Esophagus muscularis mucosa (tissue), 4 donors: ENCODE measurements at regions of chr21 and their contacts with region 1.

Region 1: DNA sequence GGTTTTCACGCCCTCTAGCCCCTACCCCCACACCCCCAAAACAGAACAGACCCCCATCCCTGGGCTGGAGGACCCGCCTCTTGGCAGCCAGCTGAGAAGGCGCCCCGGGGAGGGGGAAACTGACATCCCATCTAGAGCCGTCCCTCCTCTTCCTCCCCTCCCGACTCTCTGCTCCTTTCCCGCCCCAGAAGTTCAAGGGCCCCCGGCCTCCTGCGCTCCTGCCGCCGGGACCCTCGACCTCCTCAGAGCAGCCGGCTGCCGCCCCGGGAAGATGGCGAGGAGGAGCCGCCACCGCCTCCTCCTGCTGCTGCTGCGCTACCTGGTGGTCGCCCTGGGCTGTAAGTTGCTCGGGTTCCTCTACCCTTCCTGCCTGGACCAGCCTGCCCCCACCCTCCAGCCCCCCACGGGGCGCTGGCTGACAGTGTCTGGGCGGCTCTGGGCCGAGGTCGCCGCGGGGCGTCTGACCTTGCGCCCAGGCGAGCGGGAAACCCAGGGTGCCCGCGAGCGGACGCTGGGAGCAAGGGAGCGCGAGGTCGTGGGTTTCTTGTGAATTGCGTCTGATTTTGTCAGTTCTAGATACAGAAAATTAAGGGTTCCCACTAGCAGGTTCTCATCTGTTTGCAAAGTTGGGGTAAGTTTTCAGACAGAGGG is 618 bp downstream of the JAM2 start:
- DNase-seq: no peak
- H3K4me3 ChIP-seq: peak overlapping the region; percentile 76 to 90 (median 86)
- H3K27ac ChIP-seq: peak overlapping the region; percentile 93 to 97 (median 94)
- H3K4me1 ChIP-seq: peaks cover 10 to 35% (median 17%) of the 10 kb centered on the region in 4 donors
- H3K27me3 ChIP-seq: no peaks in the 10 kb centered on the region
- CTCF ChIP-seq: peak; percentile 26 to 52 (median 41)
- EP300 ChIP-seq: no peak
- POLR2A ChIP-seq: no peak

Region 2: DNA sequence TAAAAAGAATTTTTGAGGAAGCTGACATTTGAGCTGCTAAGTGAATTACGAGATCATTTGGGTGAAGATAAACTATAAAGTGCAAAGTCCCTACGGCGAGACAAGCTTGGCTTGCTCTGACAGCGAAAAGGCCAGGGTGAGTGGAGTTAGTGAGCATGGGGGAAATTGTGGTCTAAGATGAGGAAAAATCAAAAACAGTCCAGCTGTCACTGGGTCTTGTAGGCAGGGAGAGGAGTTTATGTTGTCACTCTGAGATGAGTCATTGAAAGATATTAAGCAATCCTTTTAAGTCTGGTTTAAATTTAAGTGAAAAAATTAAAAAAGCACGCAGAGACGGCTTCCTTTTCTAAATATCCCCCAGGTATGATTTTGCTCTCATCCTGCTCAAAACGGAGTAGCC is 634.3 kb before region 1 on chr21:
- intact Hi-C with region 1: no loop called
- DNase-seq: no peak
- H3K4me3 ChIP-seq: no peak overlapping the region
- H3K27ac ChIP-seq: no peak overlapping the region
- H3K4me1 ChIP-seq: no peaks in the 10 kb centered on the region
- H3K27me3 ChIP-seq: no peaks in the 10 kb centered on the region
- CTCF ChIP-seq: no peak
- EP300 ChIP-seq: no peak
- POLR2A ChIP-seq: no peak

Region 3: DNA sequence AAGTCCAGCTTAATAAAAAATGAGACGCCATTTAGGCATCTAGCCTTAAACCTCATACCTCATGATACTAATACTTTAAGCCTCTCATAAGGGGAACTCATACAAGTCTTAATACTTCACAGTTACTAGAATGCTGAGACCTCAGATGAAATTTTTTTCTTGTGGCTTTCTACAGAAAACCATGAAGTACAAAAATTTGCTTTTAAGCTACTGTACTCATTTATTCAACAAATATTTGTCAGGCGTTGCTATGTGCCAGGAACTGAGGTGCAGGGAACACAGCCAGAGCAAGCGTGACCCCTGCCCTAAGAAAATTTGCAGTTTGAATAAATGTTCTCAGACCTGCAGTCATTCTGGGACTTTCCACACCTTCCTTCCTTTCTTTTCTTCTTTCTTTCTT is 183.0 kb before region 1 on chr21:
- intact Hi-C with region 1: no loop called
- DNase-seq: no peak
- H3K4me3 ChIP-seq: no peak overlapping the region
- H3K27ac ChIP-seq: no peak overlapping the region
- H3K4me1 ChIP-seq: peaks cover 0 to 6% (median 2%) of the 10 kb centered on the region in 4 donors
- H3K27me3 ChIP-seq: no peaks in the 10 kb centered on the region
- CTCF ChIP-seq: no peak
- EP300 ChIP-seq: no peak
- POLR2A ChIP-seq: no peak

Region 4: DNA sequence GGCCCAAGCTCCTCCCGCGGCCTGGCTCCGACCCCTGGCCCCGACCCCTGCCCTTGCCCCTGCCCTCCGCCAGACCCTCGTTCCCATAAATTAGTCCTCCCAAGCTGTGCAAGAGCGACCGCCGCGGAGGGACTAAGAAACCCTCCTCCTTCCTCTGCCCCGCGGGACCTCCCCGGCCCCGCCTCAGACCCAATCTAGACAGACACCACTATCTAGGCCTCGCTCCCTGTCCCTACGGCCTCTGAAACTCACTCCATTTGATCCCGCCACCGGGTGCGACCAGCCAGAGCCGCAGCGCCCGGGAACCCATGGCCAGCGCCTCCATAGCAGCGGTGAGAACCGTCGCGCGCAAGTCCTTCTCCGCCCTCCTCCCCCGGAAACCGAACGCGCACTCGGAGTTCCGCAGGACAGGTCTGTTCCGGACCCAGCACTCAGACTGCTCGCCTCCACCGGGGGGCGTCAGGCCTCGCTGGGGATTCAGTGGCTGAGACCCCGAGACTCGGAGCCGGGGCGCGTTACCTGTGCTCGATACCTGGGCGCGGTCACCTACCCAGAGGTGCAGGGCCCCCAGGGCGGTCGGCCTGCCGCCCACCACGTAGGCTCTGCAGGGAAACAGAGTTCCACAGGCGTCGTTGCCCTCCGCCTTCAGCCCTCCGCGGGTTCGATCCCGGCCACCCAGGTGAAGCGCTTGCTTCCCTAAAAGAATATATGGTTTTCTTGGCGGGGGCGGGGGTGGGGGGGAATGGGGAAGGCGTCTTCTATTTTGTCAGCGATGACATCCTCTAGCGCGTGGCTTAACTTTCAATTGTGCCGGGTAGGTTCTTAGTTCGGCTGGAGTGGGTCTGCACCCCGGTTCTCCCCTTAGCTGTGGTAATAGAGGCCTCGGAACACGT is 32.3 kb before region 1 on chr21 and contains the start of gene MRPL39:
- intact Hi-C with region 1: loop called (anchors 2 kb)
- DNase-seq: peak; percentile 95
- H3K4me3 ChIP-seq: peak within 1 kb of the TSS; percentile 65 to 93 (median 82)
- H3K27ac ChIP-seq: peak within 1 kb of the TSS; percentile 77 to 88 (median 83)
- H3K4me1 ChIP-seq: peaks cover 13 to 55% (median 37%) of the 10 kb centered on the region in 4 donors
- H3K27me3 ChIP-seq: no peaks in the 10 kb centered on the region
- CTCF ChIP-seq: peak; percentile 44 to 59 (median 54)
- EP300 ChIP-seq: no peak
- POLR2A ChIP-seq: no peak
- total RNA-seq, gene MRPL39: 22.0 to 31.8 (median 27.4) TPM

Region 5: GRCh38 chr21:25664491-25664931 is 24.8 kb after region 1 on chr21:
- intact Hi-C with region 1: no loop called
- DNase-seq: no peak
- H3K4me3 ChIP-seq: no peak overlapping the region
- H3K27ac ChIP-seq: peak overlapping the region in 3 of 4 donors; percentile 37 to 50 (median 48)
- H3K4me1 ChIP-seq: peaks cover 0 to 13% (median 10%) of the 10 kb centered on the region in 4 donors
- H3K27me3 ChIP-seq: no peaks in the 10 kb centered on the region
- CTCF ChIP-seq: no peak
- EP300 ChIP-seq: no peak
- POLR2A ChIP-seq: no peak

Region 6: DNA sequence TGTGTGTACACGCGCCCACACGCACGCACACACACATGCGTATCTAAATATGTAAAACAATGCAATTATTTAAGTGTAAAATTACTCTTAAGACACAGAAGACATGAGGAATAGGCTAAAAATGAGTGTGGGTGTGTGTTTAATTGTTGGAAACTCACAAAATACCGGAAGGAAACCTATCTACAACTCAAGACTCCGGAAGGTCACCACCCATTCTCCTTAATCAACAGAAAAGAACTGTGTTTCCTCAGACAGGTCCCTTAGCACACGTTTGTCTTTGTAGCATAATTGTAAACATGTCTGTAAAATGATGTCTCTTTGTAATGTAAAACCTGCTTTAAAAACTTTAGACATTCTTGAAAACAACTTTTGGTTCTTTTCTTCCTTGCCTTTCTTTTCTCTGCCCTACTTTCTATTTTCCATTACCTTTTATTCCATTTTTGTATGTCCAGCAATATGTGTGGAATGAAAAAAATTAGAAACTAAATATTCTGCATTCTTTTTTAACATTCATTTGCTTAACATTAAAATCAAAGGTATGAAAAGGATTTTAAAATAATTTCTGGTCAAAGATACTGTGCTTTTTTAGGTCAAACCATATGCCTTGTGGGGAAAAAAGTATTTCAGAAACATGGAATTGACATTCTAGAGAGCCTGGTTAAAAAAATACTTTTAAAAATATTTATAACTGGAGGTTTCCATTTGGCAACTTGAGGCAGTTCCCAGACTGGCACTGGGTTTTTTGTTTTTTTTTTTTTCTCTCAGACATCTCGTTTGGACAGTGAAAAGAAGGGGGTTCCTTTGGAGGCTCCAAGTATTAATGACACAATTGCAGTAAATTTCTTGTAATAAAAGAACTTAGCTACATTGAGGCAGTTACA is 48.8 kb after region 1 on chr21:
- intact Hi-C with region 1: loop called (anchors 5 kb)
- DNase-seq: no peak
- H3K4me3 ChIP-seq: no peak overlapping the region
- H3K27ac ChIP-seq: peak overlapping the region; percentile 56 to 74 (median 58)
- H3K4me1 ChIP-seq: peaks cover 15 to 50% (median 45%) of the 10 kb centered on the region in 4 donors
- H3K27me3 ChIP-seq: no peaks in the 10 kb centered on the region
- CTCF ChIP-seq: no peak
- EP300 ChIP-seq: no peak
- POLR2A ChIP-seq: no peak